ENCODE measurements at regions of chr22 and their contacts with region 1.

Region 1: GRCh38 chr22:37862570-37863325 is 13.5 kb downstream of the EIF3L start:
- DNase-seq: no peak
- CTCF ChIP-seq: no peak

Region 2: GRCh38 chr22:37608477-37609239 is 254.1 kb before region 1 on chr22 and contains the start of gene GGA1:
- CTCF ChIA-PET with region 1: interaction called, 10 read pairs
- POLR2A ChIA-PET with region 1: no interaction called
- DNase-seq: peak; percentile 97
- CTCF ChIP-seq: no peak

Region 3: GRCh38 chr22:37658133-37659065 is 204.3 kb before region 1 on chr22 and contains the start of gene PDXP:
- CTCF ChIA-PET with region 1: interaction called, 14 read pairs
- POLR2A ChIA-PET with region 1: no interaction called
- DNase-seq: peak; percentile 97
- CTCF ChIP-seq: no peak

Region 4: GRCh38 chr22:37807410-37808293 is 55.1 kb before region 1 on chr22 and contains the start of gene GCAT:
- CTCF ChIA-PET with region 1: interaction called, 21 read pairs
- POLR2A ChIA-PET with region 1: interaction called, 7 read pairs
- DNase-seq: peak; percentile 99
- CTCF ChIP-seq: no peak

Region 5: GRCh38 chr22:37843741-37843990 is 19.1 kb before region 1 on chr22:
- CTCF ChIA-PET with region 1: interaction called, 10 read pairs
- POLR2A ChIA-PET with region 1: interaction called, 4 read pairs
- DNase-seq: peak; percentile 68
- CTCF ChIP-seq: no peak

Region 6: DNA sequence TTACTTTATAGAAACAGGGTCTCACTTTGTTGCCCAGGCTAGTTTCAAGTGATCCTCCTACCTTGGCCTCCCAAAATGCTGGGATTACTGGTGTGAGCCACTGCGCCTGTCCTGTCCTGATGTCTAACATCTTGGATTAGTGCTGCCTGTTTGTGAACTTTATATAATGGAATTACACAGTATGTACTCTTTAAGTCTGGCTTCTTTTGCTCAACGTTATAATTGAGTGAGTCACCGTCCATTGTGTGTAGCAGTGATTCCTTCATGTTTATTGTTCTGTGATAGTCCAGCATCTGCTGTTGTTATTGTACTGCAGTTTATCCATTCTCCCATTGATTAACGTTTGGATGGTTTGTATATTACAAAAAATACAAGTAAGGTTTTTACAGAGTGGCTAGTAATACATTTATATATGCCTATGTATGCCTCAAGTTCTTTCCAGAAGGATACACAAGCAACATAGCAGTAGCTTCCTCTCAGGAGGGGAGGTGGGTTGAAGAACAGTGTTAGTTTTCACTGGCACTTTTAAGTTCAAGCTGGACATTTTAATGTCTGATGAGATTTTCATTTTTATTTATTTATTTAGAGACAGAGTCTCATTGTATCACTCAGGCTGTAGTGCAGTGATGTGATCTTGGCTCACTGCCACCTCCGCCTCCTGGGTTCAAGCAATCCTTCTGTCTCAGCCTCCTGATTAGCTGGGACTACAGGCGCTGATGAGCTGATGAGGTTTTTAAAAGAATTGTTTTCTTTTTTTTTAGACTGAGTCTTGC is 18.1 kb after region 1 on chr22:
- CTCF ChIA-PET with region 1: interaction called, 49 read pairs
- POLR2A ChIA-PET with region 1: no interaction called
- DNase-seq: no peak
- CTCF ChIP-seq: no peak

Region 7: GRCh38 chr22:37933711-37934376 is 71.1 kb after region 1 on chr22:
- CTCF ChIA-PET with region 1: no interaction called
- POLR2A ChIA-PET with region 1: no interaction called
- DNase-seq: peak; percentile 92
- CTCF ChIP-seq: peak; percentile 98

Measured in GM10248 (cell line).